ENCODE measurements at regions of chr1 and their contacts with region 1.

Region 1: GRCh38 chr1:160607011-160607671 is 27.8 kb upstream of the CD84 start:
- DNase-seq: peak; percentile 37
- H3K4me3 ChIP-seq: no peak overlapping the region
- H3K27ac ChIP-seq: no peak overlapping the region
- H3K4me1 ChIP-seq: no peaks in the 10 kb centered on the region
- H3K27me3 ChIP-seq: no peaks in the 10 kb centered on the region
- CTCF ChIP-seq: peak in 3 of 4 experiments; percentile 62 to 79 (median 69)
- POLR2A ChIP-seq: no peak

Region 2: DNA sequence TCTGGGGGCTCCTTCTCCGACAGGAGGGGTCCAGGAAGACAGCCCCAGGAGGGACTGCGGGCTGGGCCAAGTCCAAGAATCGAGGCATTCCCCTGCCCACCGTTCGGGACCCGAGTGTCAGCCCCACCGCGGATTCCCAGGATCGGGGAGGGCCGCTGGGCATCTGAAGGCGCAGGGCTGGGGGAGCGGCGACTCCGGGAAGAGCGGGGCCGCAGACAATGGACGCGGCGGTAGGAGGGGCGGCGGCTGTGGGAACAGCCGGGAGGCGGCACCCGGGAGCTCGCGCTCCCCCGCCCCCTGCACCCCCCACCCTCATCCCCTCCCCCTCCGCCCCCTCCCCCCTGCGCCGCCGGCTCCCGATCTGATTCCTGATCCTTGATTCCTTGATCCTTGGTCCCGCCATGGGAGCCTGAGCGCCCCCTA is 206.9 kb before region 1 on chr1 and contains the start of gene VANGL2:
- intact Hi-C with region 1: no loop called
- DNase-seq: peak; percentile 73
- H3K4me3 ChIP-seq: peak within 1 kb of the TSS; percentile 82 to 91
- H3K27ac ChIP-seq: peak within 1 kb of the TSS; percentile 81 to 83
- H3K4me1 ChIP-seq: peaks cover 3% of the 10 kb centered on the region
- H3K27me3 ChIP-seq: no peaks in the 10 kb centered on the region
- CTCF ChIP-seq: no peak
- POLR2A ChIP-seq: peak; percentile 28
- total RNA-seq, gene VANGL2: 9.7 to 13.6 TPM

Region 3: GRCh38 chr1:160428655-160429054 is 178.5 kb before region 1 on chr1:
- intact Hi-C with region 1: loop called (anchors 5 kb)
- DNase-seq: no peak
- H3K4me3 ChIP-seq: no peak overlapping the region
- H3K27ac ChIP-seq: no peak overlapping the region
- H3K4me1 ChIP-seq: peaks cover 2% of the 10 kb centered on the region
- H3K27me3 ChIP-seq: no peaks in the 10 kb centered on the region
- CTCF ChIP-seq: peak in 3 of 4 experiments; percentile 46 to 58 (median 56)
- POLR2A ChIP-seq: no peak

Region 4: DNA sequence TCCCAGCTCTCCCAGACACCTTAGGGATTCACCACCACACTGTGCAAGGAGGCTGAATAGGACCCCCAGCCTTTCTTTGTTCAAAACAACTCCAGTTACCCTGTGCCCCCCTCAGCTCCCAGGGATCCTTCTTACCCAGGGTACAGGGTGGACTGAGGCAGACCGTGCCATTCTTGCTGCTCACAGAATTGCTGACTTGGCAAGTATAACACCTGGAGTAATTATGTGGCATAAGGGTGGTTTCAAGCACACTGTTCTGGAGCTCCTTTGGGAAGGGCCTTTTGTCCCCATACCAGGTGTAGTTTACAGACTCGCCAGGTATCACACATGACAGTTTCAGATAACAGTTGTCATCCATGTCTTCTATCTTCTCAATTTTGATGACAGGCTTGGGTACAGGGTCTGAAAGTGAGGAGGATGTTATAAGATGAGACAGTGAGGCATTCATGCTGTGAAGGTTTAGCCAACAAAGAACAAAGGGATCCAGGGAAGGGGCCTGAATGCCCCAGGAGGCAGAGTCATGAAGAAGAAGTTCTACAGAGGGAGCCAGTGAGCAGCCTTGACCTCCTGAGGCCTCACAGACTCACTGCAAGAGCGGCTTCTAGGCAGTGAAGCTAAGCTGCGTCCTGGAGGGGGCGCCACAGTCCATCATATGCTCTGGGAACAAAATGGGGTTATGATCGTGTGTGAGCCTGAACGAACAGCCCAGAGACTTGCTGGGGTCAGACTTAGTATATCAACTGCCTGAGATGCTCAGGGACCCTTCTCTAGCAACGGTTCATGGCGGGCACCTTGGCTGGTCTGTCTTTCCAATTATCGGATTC is 74.1 kb after region 1 on chr1:
- intact Hi-C with region 1: no loop called
- DNase-seq: no peak
- H3K4me3 ChIP-seq: no peak overlapping the region
- H3K27ac ChIP-seq: no peak overlapping the region
- H3K4me1 ChIP-seq: no peaks in the 10 kb centered on the region
- H3K27me3 ChIP-seq: no peaks in the 10 kb centered on the region
- CTCF ChIP-seq: peak in 2 of 4 experiments; percentile 36 to 47
- POLR2A ChIP-seq: no peak

Measured in prostate gland (tissue), 2 donors.